Left cardiac atrium (tissue), 4 donors: ENCODE measurements at regions of chr13 and their contacts with region 1.

Region 1: DNA sequence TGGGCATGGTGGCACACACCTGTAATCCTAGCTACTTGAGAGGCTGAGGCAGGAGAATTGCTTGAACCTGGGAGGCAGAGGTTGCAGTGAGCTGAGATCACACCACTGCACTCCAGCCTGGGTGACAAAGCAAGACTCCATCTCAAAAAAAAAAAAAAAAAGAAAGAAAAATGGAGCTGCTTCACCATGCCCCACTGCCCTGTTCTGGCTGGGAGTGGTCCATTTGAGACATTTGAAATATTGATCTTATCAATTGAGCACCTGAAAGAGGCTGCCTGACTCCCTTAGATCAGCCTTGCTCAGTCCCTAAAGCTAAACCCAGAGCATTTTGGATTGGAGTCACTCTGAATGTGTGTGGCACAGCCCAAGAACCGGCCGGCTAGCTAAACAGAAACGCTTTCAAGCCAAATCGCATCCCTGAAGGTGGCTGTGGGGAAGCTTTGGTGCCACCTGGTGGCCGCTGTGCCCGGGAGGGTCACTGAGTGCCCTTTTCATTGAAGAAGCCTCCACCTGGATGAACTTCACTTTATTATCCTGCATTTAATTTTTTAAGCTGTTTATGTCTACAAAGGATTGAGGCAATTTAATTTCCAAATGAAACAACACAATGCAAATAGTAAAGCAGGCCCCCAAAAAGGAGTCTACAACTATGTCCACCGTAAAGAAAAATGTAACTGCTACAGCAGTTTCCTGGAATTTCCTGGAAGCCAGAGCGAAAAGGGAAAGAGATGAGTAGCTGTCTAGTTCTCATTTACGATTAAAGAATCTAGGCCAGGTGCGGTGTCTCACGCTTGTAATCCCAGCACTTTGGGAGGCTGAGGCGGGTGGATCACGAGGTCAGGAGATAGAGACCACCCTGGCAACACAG is 53.1 kb upstream of the SERPINE3 start:
- DNase-seq: peak; percentile 86
- ATAC-seq: peak; percentile 85 to 90

Region 2: DNA sequence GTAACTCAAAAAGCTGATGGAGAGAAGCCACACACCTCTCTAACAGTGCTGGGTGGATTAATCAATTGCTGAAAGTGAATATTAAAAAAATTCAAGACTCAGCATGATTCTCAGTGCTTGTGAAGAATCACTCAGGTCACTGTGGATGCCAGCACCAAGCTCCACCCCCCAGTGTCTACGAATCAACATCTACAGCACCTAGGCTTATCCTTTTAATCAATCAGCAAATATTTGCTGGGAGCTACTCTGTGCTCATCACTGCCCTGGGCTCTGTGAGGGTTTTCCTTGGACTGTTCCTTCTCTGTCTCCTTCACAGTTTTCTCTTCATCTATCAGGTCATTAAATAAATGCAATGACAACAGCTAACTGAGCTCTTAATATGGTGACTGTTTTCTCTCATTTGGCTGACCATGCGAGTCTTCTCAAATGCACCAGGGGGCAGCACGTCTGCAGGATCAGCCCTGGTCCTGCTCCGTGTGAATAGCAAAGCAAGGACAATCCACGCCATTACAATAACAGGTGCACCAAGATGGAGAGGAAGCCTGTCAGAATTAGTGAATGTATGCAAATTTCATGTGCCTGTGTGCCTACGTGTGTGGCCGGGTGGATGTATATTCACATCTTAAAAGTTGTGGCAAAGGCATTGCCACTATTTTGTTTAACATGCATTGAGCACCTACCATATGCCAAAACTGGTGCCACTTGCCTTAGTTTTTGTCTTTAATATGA is 160.7 kb before region 1 on chr13:
- intact Hi-C with region 1: loop called in 1 of 2 experiments (anchors 5 kb)
- DNase-seq: peak; percentile 43
- ATAC-seq: peak; percentile 67 to 75

Region 3: DNA sequence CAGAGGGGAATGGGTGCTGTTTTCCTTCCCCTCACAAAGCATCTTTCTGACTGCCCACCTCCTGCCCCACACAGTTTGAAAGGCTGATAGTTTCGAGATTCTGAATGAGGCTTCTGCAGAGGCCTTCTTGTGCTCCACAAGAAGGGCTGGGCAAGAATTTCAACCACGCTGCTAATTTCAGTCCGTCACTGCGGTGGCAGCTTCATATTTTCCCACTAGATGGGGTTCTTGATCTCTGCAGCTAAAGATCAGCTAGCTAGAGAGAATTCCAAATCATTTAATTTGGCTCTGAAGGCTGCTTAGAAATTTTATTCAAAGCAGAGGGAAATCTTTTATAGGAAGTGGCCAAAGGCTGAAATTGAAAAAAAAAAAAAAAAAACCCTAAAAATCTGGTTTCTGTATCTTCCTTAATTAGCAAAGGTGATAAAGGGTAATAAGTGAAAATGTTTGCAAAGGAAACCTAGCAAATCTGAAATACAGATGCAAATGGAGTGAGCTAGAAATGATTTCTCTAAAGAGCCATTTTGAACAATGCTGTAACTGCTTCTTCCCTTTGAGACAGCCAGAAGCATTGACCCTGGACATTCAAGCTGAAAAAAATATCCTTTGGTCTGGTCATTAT is 137.3 kb before region 1 on chr13:
- intact Hi-C with region 1: loop called (anchors 2 to 5 kb)
- DNase-seq: peak; percentile 31
- ATAC-seq: peak; percentile 69 to 85

Region 4: GRCh38 chr13:51222037-51222685 is 64.2 kb before region 1 on chr13 and contains the start of gene FAM124A:
- intact Hi-C with region 1: loop called in 1 of 2 experiments (anchors 5 kb)
- DNase-seq: peak; percentile 67
- ATAC-seq: peak; percentile 86 to 93
- total RNA-seq, gene FAM124A: 5.9 to 10.0 TPM